Activated CD4-positive, alpha-beta memory T cell treated with anti-CD3 and anti-CD28 coated beads for 36 hours (primary cell): ENCODE measurements at regions of chr12 and their contacts with region 1.

Region 1: GRCh38 chr12:47837190-47838171 is 17.8 kb upstream of the HDAC7 start:
- DNase-seq: peak; percentile 76
- H3K4me3 Mint-ChIP-seq: no peak overlapping the region
- H3K27ac Mint-ChIP-seq: peak overlapping the region; percentile 68
- H3K4me1 Mint-ChIP-seq: peaks cover 59% of the 10 kb centered on the region
- H3K27me3 Mint-ChIP-seq: no peaks in the 10 kb centered on the region

Region 2: GRCh38 chr12:47705566-47706425 is 131.7 kb before region 1 on chr12 and contains the start of gene RPAP3:
- CTCF ChIA-PET with region 1: interaction called, 11 read pairs
- POLR2A ChIA-PET with region 1: interaction called, 7 read pairs
- intact Hi-C with region 1: no loop called
- DNase-seq: peak; percentile 99
- H3K4me3 Mint-ChIP-seq: peak within 1 kb of the TSS; percentile 96
- H3K27ac Mint-ChIP-seq: peak within 1 kb of the TSS; percentile 95
- H3K4me1 Mint-ChIP-seq: peaks cover 50% of the 10 kb centered on the region
- H3K27me3 Mint-ChIP-seq: no peaks in the 10 kb centered on the region
- total RNA-seq, gene RPAP3: 49.4 to 50.2 TPM

Region 3: GRCh38 chr12:47742253-47742825 is 95.1 kb before region 1 on chr12:
- CTCF ChIA-PET with region 1: interaction called, 379 read pairs
- POLR2A ChIA-PET with region 1: interaction called, 16 read pairs
- intact Hi-C with region 1: loop called (anchors 1 kb)
- DNase-seq: peak; percentile 85
- H3K4me3 Mint-ChIP-seq: no peak overlapping the region
- H3K27ac Mint-ChIP-seq: no peak overlapping the region
- H3K4me1 Mint-ChIP-seq: peaks cover 29% of the 10 kb centered on the region
- H3K27me3 Mint-ChIP-seq: no peaks in the 10 kb centered on the region

Region 4: GRCh38 chr12:47779301-47779942 is 58.1 kb before region 1 on chr12:
- CTCF ChIA-PET with region 1: interaction called, 127 read pairs
- POLR2A ChIA-PET with region 1: interaction called, 8 read pairs
- intact Hi-C with region 1: loop called (anchors 1 kb)
- DNase-seq: peak; percentile 95
- H3K4me3 Mint-ChIP-seq: no peak overlapping the region
- H3K27ac Mint-ChIP-seq: no peak overlapping the region
- H3K4me1 Mint-ChIP-seq: peaks cover 17% of the 10 kb centered on the region
- H3K27me3 Mint-ChIP-seq: no peaks in the 10 kb centered on the region

Region 5: GRCh38 chr12:47797441-47797840 is 40.0 kb before region 1 on chr12:
- CTCF ChIA-PET with region 1: interaction called, 795 read pairs
- POLR2A ChIA-PET with region 1: interaction called, 13 read pairs
- intact Hi-C with region 1: loop called (anchors 1 kb)
- DNase-seq: peak; percentile 47
- H3K4me3 Mint-ChIP-seq: no peak overlapping the region
- H3K27ac Mint-ChIP-seq: no peak overlapping the region
- H3K4me1 Mint-ChIP-seq: peaks cover 17% of the 10 kb centered on the region
- H3K27me3 Mint-ChIP-seq: no peaks in the 10 kb centered on the region

Region 6: DNA sequence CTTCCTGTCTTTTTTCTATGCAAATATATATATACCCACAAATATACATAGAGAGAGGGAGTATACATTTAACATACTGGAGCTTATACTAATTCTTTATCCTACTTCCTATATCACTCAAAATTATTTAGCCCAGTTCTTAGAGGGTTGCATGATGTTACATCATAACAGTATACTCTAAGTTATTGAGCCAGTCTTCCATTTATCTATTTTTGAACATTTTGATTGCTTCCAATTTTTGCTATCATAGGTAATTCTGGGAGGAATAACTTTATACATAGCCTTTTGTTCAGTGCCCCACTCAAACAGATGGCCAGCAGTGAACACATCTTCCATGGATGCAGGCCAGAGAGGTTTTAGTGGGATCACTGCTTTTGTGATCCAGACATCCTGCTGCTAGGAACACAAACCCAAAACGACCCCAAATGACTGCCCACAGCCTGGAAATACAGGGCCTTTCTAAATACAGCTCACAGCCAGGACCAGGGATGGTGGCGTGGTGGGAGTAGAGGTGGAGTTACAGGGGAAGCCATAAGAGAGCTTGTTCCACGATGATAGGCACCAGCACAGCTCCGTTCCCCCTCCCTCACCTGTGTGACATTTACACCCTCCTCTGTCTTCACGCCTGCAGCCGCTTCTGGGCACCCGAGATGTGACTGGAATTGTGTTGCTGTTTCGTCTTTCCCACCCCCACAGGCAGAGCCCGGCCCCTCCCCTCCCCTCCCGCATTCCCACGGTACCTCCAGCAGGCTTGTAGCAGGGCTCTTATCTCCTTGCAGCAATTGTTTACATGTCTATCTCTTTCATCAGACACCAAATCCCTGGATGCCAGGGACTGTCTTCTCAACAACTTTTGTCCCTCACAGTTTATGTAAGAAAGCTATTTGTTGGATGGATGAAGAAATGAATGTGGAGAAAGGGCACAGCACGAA is 12.9 kb after region 1 on chr12:
- CTCF ChIA-PET with region 1: interaction called, 38 read pairs
- POLR2A ChIA-PET with region 1: no interaction called
- intact Hi-C with region 1: no loop called
- DNase-seq: no peak
- H3K4me3 Mint-ChIP-seq: no peak overlapping the region
- H3K27ac Mint-ChIP-seq: no peak overlapping the region
- H3K4me1 Mint-ChIP-seq: peaks cover 14% of the 10 kb centered on the region
- H3K27me3 Mint-ChIP-seq: no peaks in the 10 kb centered on the region

Region 7: DNA sequence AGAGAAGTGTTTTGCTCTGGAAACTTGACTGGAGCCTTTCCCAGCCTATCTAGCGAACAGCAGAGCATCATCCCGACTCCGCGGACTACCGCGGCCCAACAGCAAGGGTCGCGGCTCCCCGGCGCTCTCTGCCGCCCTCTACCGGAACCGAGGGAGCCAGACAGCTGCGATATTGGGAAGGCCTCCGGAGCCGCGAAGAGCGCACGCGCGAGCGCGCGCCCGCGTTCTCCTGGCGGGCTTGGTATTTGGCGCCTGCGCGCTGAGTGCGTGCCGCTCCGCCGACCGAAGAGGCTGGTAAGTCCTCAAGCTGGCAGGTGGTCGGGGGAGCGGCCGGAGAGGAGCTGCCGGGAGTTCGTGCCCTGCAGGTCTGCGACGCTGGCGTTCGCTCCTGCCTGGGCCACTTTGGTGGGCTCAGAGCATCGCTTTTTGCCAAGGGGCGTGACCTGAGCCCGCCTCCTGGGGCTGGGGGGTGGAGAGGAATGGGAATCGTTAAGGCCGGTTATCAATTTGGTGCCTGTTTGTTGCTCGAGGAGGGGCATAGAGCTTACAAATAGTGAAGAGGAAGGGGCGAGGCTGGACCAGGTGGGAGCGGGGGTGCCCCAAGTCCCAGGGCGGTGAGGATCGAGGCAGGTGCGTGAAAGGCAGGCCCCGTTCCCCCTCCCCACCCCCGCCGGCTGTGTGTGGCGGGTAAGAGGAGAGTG is 126.0 kb after region 1 on chr12 and contains the start of gene TMEM106C:
- CTCF ChIA-PET with region 1: interaction called, 10 read pairs
- POLR2A ChIA-PET with region 1: interaction called, 3 read pairs
- intact Hi-C with region 1: no loop called
- DNase-seq: peak; percentile 94
- H3K4me3 Mint-ChIP-seq: peak within 1 kb of the TSS; percentile 98
- H3K27ac Mint-ChIP-seq: peak within 1 kb of the TSS; percentile 81
- H3K4me1 Mint-ChIP-seq: peaks cover 34% of the 10 kb centered on the region
- H3K27me3 Mint-ChIP-seq: peaks cover 5% of the 10 kb centered on the region
- total RNA-seq, gene TMEM106C: 179 to 182 TPM

Region 8: GRCh38 chr12:48442191-48442828 is 604.8 kb after region 1 on chr12:
- CTCF ChIA-PET with region 1: no interaction called
- POLR2A ChIA-PET with region 1: no interaction called
- intact Hi-C with region 1: no loop called
- DNase-seq: no peak
- H3K4me3 Mint-ChIP-seq: no peak overlapping the region
- H3K27ac Mint-ChIP-seq: no peak overlapping the region
- H3K4me1 Mint-ChIP-seq: peaks cover 8% of the 10 kb centered on the region
- H3K27me3 Mint-ChIP-seq: no peaks in the 10 kb centered on the region